ENCODE measurements at regions of chr15 and their contacts with region 1.

Region 1: GRCh38 chr15:73972984-73973682 is 19.0 kb downstream of the STOML1 start:
- DNase-seq: peak; percentile 94

Region 2: DNA sequence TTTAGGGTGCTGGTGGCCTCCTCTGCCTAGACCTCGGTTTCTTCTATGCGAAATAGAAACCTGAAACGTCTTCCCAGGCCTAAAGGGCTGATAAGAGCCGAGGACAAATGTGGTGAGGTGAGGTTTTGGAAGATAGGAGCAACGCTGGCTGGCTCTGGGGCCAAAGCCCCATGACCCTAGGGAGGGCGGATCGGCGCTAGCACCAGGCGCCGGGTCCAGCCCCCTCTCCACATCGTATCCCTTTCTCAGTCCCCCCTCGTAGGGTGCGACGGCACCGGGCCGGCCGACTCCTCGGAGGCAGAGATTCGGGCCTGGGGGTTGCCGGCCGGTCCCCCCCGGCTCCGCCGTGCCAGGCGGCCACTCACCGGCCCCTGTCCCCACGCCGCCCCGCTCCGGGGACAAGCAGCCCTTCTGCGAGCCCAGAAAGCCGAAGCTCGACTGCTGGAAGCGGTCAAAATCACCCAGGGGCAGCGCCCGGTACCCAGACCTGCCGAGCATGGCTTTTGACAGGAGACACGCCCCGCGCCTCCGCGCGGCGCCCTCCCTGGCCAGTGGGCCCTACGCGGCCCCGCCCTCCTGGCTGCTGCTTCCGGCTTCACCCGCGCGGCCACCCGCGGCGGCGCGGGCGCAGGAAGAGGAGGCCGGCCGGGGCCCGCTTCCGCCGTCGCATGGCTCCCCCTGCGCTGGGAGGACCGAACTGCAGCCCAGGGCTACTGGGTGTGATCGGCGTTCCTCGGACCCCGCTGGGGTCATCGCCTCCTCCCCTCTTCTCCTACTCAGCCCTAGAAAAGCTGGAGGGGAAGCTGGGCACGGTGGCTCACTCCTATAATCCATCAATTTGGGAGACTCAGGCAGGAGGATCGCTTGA is 18.8 kb after region 1 on chr15 and contains the start of gene STOML1:
- intact Hi-C with region 1: no loop called
- DNase-seq: peak; percentile 98
- total RNA-seq, gene STOML1: 17.3 to 20.1 TPM

Region 3: GRCh38 chr15:74036271-74037170 is 63.4 kb after region 1 on chr15:
- intact Hi-C with region 1: loop called in 1 of 2 experiments (anchors 5 kb)
- DNase-seq: peak; percentile 78

Region 4: GRCh38 chr15:74307827-74308644 is 334.9 kb after region 1 on chr15:
- intact Hi-C with region 1: loop called in 1 of 2 experiments (anchors 5 kb)
- DNase-seq: no peak

Measured in posterior vena cava (tissue), 2 donors.